Heart right ventricle (tissue), 16 donors: ENCODE measurements at regions of chr1 and their contacts with region 1.

Region 1: DNA sequence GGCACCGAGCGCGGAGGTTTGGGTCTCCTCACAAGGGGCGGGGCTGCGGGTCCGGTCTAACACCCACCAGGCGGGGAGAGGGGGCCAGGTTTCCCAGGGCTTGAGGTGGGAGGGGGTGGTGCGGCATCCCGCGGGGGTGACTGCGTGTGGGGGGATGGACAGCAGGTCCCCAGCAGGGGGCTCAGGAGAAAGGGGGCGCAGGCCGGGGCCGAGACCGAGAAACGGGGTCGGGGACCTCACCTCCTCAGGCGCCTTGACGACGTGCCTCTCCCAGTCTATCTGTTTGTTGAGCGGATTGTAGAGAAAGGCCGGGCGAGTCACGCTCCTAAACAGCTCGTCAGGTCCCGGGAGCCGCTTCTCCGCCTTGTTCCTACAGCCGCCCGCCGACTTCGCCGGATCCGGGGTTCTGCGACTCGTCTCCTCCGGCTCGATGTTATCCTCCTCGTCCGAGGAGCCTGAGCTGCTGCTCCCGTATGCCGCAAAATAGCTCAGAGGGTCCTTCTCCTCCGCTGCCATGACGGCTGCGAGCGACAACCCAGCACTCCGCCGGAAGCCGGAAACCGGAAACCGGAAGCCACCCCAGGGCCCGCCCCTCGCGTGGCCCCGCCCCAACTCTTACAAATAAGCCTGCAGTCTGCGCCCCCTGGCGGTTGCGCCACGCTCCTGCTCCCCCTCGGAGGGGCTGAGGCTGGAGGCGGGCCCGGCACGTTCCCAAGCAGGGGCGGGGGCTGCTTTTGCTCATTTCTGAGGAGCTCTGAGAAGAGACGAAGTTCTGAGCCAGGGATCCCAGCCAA is at the start of gene C1orf52:
- DNase-seq: peak; percentile 96 to 97
- ATAC-seq: peak; percentile 97 to 99 (median 98)
- H3K4me3 ChIP-seq: peak within 1 kb of the TSS; percentile 76 to 98 (median 90)
- H3K27ac ChIP-seq: peak within 1 kb of the TSS; percentile 78 to 95 (median 87)
- H3K4me1 ChIP-seq: peaks cover 6 to 47% (median 32%) of the 10 kb centered on the region in 9 donors
- H3K27me3 ChIP-seq: no peaks in the 10 kb centered on the region
- CTCF ChIP-seq: peak; percentile 95 to 100 (median 99)
- total RNA-seq, gene C1orf52: 12.8 to 21.3 (median 15.0) TPM

Region 2: DNA sequence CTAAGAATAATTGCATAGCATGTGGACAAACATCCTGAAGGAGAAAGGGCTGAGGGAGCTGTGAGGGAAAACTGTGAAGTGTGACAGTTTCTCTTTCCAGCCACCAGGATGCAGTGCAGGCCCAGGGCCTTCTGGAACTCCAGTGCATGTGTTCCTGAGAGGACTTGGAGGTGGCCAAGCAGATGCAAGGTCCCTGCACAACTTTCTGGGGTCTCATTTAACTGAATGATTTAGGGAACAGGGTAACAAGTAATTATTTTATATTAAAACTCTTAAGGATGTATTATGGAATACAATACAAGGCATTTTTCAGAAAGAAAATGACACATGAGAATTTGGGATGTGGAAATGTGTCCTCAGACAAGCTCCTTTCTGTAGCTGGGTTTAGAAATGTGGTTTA is 149.8 kb before region 1 on chr1:
- intact Hi-C with region 1: loop called in 7 of 10 experiments (anchors 1 to 5 kb)
- DNase-seq: peak; percentile 32 to 38
- ATAC-seq: peak in 7 of 8 donors; percentile 77 to 93 (median 88)
- H3K4me3 ChIP-seq: no peak overlapping the region
- H3K27ac ChIP-seq: no peak overlapping the region
- H3K4me1 ChIP-seq: no peaks in the 10 kb centered on the region
- H3K27me3 ChIP-seq: no peaks in the 10 kb centered on the region
- CTCF ChIP-seq: peak; percentile 42 to 78 (median 74)

Region 3: DNA sequence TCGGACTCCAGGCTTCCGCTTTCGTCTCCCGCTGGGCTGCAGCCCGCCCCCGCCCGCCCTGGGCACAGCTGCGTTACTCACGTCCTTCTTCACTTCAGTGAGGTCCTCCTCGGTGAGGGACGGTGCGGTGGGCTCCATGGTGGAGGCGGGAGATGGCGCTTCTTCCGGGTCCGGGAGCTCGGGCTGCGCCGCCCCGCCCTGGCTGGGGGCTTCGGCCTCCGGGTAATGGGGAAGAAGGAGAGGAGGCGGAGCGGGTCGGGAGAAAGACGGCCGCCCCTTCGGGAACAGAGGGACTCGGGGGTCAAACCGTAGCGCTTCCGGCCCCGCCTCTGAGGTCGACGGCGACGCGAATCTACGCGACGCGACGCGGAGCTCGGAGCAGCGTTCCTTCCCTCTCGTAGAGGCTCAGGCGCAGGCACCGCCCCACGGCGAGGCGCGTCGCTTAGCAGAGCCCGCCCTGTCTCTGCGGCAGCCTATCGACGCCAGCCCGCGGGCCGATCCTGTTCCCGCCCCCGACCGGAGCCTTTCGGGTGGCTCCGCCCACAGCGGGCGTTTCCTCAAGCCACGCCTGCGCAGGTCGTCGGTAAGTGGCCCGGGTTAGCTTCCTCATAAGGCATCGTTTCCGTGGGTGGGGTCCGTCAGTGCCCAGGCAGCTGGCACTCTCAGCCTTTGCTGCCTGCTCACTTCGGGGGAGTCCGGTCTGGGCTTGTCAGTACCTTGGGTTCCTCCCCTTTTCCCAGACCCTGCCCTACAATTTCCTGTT is 17.1 kb after region 1 on chr1 and contains the start of gene BCL10:
- intact Hi-C with region 1: loop called in 1 of 10 experiments (anchors 2 kb)
- DNase-seq: peak; percentile 97 to 99
- ATAC-seq: peak; percentile 98 to 100 (median 99)
- H3K4me3 ChIP-seq: peak within 1 kb of the TSS; percentile 68 to 98 (median 90)
- H3K27ac ChIP-seq: peak within 1 kb of the TSS; percentile 82 to 99 (median 96)
- H3K4me1 ChIP-seq: peaks cover 12 to 67% (median 36%) of the 10 kb centered on the region in 9 donors
- H3K27me3 ChIP-seq: no peaks in the 10 kb centered on the region
- CTCF ChIP-seq: no peak
- total RNA-seq, gene BCL10: 6.2 to 15.3 (median 9.4) TPM

Region 4: DNA sequence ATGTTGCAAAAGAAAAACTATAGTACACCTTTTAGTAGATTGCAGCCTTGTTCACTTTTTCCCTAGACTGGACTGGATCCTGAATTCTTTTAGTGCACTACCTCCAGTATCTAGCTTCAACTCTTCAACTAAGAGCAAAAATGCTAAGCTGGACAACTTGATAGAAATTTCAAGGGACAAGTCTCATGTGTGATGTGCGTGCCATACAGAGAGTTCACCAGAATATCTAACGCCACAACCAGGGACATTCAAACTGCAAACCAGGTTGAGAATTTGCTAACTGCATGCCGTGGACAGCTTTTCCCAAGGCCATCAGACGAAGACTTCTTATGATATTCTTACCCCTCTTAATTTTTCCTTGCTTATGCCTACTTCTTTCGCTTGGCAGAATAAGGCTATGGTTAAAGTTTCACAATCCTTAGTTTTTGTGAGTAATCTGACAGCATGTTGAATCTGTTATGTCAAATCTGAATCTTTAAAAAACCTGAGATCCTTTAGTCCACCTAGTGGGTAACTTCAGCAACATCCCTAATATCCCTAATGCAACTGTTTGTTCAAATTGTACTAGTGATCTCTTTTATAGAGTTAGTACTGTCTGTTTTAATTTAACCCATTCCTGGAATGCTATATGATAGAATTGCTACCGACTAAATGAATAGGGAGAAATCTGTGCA is 139.2 kb after region 1 on chr1:
- intact Hi-C with region 1: no loop called
- DNase-seq: no peak
- ATAC-seq: peak in 4 of 8 donors; percentile 40 to 56 (median 45)
- H3K4me3 ChIP-seq: no peak overlapping the region
- H3K27ac ChIP-seq: peak overlapping the region in 1 of 10 donors; percentile 12
- H3K4me1 ChIP-seq: peaks cover 0 to 16% (median 0%) of the 10 kb centered on the region in 9 donors
- H3K27me3 ChIP-seq: no peaks in the 10 kb centered on the region
- CTCF ChIP-seq: peak; percentile 19 to 62 (median 36)